Endothelial cell of umbilical vein (primary cell): ENCODE measurements at regions of chr7 and their contacts with region 1.

Region 1: GRCh38 chr7:76359111-76359978 is 554 bp upstream of the YWHAG start:
- DNase-seq: peak; percentile 98
- H3K4me3 ChIP-seq: peak overlapping the region; percentile 45 to 91 (median 49)
- H3K27ac ChIP-seq: peak overlapping the region; percentile 92
- H3K4me1 ChIP-seq: peaks cover 32% of the 10 kb centered on the region
- H3K27me3 ChIP-seq: no peaks in the 10 kb centered on the region
- CTCF ChIP-seq: peak; percentile 73 to 88
- POLR2A ChIP-seq: peak; percentile 51

Region 2: DNA sequence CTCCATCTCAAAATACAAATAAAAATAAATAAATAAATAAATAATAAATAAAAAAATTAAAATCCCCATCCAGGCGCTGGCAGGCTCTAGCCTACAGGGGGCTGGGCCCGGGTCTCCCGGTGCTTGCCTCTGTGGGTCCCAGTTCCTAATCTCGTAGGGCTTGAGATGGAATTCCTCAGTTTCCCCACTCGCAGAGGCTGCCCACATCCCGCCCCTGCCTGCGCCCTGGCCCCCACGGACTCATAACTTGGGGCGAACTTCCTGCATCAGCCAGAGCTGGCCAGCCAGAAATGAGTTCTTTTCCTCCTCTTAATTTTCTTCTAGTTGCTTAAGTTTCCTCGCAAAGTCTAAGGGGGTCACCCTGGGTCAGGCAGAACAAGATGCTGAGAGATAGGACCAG is 179.7 kb before region 1 on chr7:
- CTCF ChIA-PET with region 1: interaction called, 6 read pairs
- POLR2A ChIA-PET with region 1: no interaction called
- dilution Hi-C with region 1: no loop called
- intact Hi-C with region 1: loop called (anchors 1 kb)
- DNase-seq: no peak
- H3K4me3 ChIP-seq: no peak overlapping the region
- H3K27ac ChIP-seq: no peak overlapping the region
- H3K4me1 ChIP-seq: no peaks in the 10 kb centered on the region
- H3K27me3 ChIP-seq: no peaks in the 10 kb centered on the region
- CTCF ChIP-seq: no peak
- POLR2A ChIP-seq: no peak

Region 3: GRCh38 chr7:76298588-76298987 is 60.8 kb before region 1 on chr7:
- CTCF ChIA-PET with region 1: no interaction called
- POLR2A ChIA-PET with region 1: no interaction called
- dilution Hi-C with region 1: no loop called
- intact Hi-C with region 1: no loop called
- DNase-seq: no peak
- H3K4me3 ChIP-seq: no peak overlapping the region
- H3K27ac ChIP-seq: no peak overlapping the region
- H3K4me1 ChIP-seq: peaks cover 14% of the 10 kb centered on the region
- H3K27me3 ChIP-seq: no peaks in the 10 kb centered on the region
- CTCF ChIP-seq: no peak
- POLR2A ChIP-seq: no peak

Region 4: DNA sequence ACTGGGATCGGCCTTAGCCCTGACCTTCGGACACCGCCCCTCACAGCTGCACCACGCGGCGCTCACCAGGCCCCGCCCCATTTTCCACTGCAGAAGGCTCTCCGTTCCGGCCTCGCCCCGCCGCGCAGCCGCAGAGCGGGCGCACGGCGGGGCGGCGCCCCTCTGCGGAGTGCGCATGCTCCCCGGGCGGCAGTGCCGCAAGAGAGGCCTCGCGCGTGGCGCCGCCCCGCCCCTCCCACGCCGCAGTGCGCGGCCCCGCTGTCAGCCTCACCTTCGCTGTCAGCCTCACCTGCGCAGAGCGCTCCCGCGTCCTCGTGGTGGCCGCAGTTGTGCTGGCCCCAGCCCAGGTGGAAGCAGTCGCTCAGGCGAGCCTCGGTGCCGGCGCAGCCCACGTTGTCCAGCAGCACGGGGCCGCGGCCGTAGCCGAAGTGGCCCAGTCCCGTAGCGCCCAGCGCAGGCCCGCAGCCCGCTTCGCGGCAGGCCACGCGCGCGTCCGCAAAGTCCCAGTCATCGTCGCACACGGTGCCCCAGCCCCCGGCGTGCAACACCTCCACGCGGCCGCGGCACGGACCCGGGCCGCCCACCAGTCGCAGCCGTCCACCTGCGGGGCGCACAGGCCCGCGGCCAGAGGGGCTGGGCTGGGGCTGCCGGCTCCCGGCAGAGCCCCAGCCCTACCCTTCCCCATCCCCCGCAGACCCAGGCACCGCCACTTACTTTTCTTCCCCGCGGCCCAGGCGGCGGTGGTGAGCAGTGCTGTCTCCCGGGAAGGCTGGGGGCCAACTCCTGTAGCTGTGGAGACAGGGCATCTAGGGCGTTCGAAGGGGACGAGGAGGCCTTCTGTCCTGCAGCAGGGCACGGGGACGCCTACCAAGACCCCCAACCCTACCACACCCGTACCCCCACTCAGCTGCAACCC is 34.0 kb after region 1 on chr7:
- CTCF ChIA-PET with region 1: interaction called, 6 read pairs
- POLR2A ChIA-PET with region 1: no interaction called
- dilution Hi-C with region 1: no loop called
- intact Hi-C with region 1: loop called (anchors 1 kb)
- DNase-seq: peak; percentile 85
- H3K4me3 ChIP-seq: peak overlapping the region in 2 of 3 experiments; percentile 51 to 66
- H3K27ac ChIP-seq: no peak overlapping the region
- H3K4me1 ChIP-seq: peaks cover 10% of the 10 kb centered on the region
- H3K27me3 ChIP-seq: no peaks in the 10 kb centered on the region
- CTCF ChIP-seq: no peak
- POLR2A ChIP-seq: peak; percentile 70

Region 5: DNA sequence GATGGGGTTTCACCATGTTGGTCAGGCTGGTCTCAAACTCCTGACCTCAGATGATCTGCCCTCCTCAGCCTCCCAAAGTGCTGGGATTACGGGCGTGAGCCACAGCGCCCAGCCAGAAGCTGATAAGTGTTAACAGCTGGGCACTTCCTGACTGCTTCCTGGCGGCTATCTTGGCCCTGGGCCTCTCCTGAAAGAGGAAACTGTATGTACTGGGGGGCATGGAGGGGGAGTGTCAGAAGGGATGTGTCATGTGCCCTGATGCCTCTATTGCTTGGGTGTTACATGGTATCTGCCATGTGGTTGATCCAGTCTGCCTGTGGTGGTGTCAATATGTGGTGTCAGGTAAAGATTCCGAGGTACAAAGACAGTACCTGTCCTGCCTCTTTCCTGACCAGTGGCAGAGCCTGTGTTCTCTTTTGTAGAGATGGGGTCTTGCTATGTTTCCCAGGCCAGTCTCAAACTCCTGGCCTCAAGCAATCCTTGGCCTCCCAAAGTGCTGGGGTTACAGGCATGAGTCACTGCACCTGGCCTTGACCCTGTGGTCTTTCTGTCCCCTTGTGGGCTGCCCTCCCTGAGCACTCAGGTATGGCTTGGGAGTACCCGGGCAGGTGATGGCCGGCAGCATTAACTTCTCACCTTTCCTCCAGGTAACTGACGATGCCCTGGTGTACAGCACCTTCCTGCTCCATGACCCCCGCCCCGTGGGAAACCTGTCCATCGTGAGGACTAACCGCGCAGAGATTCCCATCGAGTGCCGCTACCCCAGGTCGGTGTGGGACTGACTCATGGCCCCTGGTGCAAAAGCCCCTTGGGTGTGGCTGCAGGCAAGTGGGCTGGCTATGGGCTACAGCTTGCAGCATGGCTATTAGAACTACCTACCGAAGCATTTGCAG is 69.8 kb after region 1 on chr7:
- CTCF ChIA-PET with region 1: interaction called, 3 read pairs
- POLR2A ChIA-PET with region 1: no interaction called
- dilution Hi-C with region 1: no loop called
- intact Hi-C with region 1: loop called (anchors 2 kb)
- DNase-seq: peak; percentile 49
- H3K4me3 ChIP-seq: no peak overlapping the region
- H3K27ac ChIP-seq: no peak overlapping the region
- H3K4me1 ChIP-seq: peaks cover 9% of the 10 kb centered on the region
- H3K27me3 ChIP-seq: no peaks in the 10 kb centered on the region
- CTCF ChIP-seq: no peak
- POLR2A ChIP-seq: no peak